WTC11 (cell line): ENCODE measurements at regions of chr11 and their contacts with region 1.

Region 1: DNA sequence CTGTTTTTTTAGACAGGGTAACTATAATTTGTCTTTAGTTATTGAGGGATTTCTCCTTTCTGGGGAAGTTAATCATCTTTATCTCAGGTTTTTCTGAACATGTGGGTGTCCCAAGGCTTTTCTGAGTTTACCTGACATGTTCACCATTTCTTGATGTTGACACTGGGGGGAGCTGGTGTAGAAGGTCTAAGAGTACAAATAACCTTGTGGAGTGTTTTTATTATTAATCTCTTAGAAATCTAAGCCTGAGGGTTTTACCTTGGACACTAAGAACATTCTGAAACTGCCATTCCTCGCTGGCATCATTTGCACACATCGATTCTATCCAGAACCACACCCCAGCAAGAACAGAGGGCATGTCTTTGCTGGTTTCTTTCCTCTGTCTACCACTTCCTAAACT is 15.6 kb upstream of the C11orf91 start:
- DNase-seq: no peak
- ATAC-seq: no peak; the same call in 1 of the 2 replicates
- H3K4me3 Mint-ChIP-seq: no peak overlapping the region
- H3K27ac Mint-ChIP-seq: no peak overlapping the region
- H3K4me1 Mint-ChIP-seq: no peaks in the 10 kb centered on the region
- H3K27me3 Mint-ChIP-seq: no peaks in the 10 kb centered on the region
- CTCF ChIP-seq: no peak

Region 2: DNA sequence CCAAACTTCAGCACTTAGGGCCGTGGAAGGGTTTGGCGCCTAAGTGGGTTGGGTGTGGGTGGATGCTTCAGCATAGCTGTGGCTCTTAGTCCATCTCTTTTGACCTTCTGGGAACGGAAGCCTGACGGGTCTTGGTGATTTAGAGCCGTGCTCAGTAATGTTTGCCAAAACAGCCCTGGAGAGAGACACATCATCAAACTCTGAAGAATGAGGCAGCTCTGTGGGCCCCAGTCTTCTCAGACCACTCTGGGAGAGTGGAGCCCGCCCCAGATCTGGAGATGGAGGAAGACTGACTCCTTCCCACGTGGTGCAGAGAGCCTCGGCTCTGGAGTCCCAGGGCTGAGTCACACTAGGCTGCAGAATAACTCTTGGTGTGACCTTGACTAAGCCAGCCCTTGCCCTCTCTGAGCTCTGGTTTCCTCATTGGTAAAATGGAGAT is 184.5 kb before region 1 on chr11:
- CTCF ChIA-PET with region 1: no interaction called
- POLR2A ChIA-PET with region 1: no interaction called
- DNase-seq: no peak
- ATAC-seq: no peak
- H3K4me3 Mint-ChIP-seq: no peak overlapping the region
- H3K27ac Mint-ChIP-seq: no peak overlapping the region
- H3K4me1 Mint-ChIP-seq: no peaks in the 10 kb centered on the region; the same call in 1 of the 2 replicates
- H3K27me3 Mint-ChIP-seq: no peaks in the 10 kb centered on the region
- CTCF ChIP-seq: no peak

Region 3: GRCh38 chr11:33575311-33575710 is 140.9 kb before region 1 on chr11:
- CTCF ChIA-PET with region 1: no interaction called
- POLR2A ChIA-PET with region 1: no interaction called
- DNase-seq: no peak
- ATAC-seq: no peak
- H3K4me3 Mint-ChIP-seq: no peak overlapping the region
- H3K27ac Mint-ChIP-seq: no peak overlapping the region
- H3K4me1 Mint-ChIP-seq: no peaks in the 10 kb centered on the region
- H3K27me3 Mint-ChIP-seq: no peaks in the 10 kb centered on the region
- CTCF ChIP-seq: no peak

Region 4: DNA sequence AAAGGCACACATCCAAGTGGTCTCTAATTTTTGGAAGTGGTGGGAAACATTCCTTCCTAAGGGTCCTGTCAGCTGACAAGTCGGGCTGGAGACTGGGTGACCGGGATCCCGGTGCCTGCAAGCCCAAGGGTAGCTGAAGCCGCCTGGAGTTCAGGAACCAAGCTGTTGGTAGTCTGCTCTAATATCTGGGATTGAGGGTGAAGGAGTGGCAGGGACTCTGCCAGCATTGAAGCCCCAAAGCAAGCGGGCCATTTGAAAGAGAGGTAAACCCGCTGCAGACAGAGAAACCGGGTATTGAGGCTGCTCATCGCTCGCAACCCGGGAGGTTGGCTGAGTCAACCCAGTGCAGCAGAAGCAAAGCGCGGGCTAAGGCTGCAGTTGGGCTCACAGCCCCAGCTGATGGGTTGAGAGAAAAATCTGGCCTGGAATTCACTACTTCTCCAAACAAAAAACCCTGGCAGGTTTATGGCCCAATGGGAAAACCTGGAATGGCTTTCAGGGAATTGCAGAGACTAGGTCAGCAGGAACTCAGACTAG is 86.2 kb after region 1 on chr11:
- CTCF ChIA-PET with region 1: interaction called, 10 read pairs
- POLR2A ChIA-PET with region 1: no interaction called
- DNase-seq: peak; percentile 78
- ATAC-seq: peak; percentile 98
- H3K4me3 Mint-ChIP-seq: peak overlapping the region; percentile 77
- H3K27ac Mint-ChIP-seq: no peak overlapping the region; the same call in 1 of the 2 replicates
- H3K4me1 Mint-ChIP-seq: peaks cover 9% of the 10 kb centered on the region
- H3K27me3 Mint-ChIP-seq: peaks cover 45% of the 10 kb centered on the region
- CTCF ChIP-seq: no peak